Gastrocnemius medialis (tissue), 4 donors: ENCODE measurements at regions of chr9 and their contacts with region 1.

Region 1: DNA sequence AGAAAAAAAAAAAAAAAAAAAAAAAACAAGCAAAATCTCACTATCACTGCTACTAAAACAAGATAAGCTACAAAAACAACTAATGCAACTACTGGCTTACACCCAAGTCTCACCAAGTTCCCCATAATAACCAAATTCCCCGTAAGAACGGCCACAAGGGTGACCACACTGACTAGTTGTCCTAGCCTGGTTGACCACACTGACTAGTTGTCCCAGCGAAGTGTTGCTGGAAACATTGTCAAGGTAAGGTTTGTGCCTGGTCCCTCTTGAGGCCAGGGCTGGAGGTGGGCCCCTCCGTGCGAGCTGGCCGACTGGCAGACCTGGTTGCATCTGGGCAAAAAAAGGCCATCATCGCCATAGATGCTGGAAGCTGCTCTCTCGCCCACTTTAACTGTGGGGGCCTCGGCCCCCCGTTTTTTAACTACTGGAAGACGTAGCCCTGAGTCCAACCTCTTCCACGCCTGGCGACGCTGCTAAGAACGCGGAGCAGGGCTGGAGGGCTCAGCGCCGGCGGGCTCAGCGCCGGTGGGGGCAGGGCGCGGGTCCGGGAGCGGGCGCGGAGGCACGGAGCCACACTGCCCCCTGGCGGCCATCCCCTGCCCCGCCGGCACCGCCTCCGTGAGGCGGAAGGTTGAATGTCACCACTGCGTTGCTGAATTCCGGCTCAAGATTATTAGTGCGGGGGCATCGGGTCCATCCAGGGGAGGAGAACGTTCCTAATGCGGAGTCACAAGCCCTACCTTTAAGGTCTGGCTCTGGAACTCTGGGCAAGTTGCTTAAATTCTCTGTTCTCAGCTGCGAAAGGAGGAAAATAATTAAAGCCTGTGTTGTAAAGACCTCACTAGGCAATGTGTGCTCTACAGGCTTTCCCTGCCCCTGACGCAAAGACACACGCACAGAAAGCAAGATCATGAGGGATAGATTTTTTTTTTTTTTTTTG is 84.0 kb downstream of the HSD17B3 start:
- DNase-seq: peak; percentile 18 to 20
- ATAC-seq: peak; percentile 77 to 81
- H3K4me3 ChIP-seq: peak overlapping the region; percentile 33 to 55 (median 40)
- H3K27ac ChIP-seq: no peak overlapping the region
- H3K4me1 ChIP-seq: peaks cover 0 to 2% of the 10 kb centered on the region in 2 donors
- H3K27me3 ChIP-seq: peaks cover 0 to 19% (median 15%) of the 10 kb centered on the region in 3 donors
- CTCF ChIP-seq: peak; percentile 76 to 92 (median 82)
- POLR2A ChIP-seq: no peak

Region 2: GRCh38 chr9:94681508-94681907 is 1536.5 kb before region 1 on chr9:
- in situ Hi-C with region 1: loop called in 1 of 4 experiments (anchors 25 kb)
- intact Hi-C with region 1: no loop called
- DNase-seq: peak; percentile 54 to 64
- ATAC-seq: peak; percentile 96 to 99
- H3K4me3 ChIP-seq: no peak overlapping the region
- H3K27ac ChIP-seq: peak overlapping the region in 1 of 4 donors; percentile 44
- H3K4me1 ChIP-seq: no peaks in the 10 kb centered on the region
- H3K27me3 ChIP-seq: no peaks in the 10 kb centered on the region
- CTCF ChIP-seq: peak; percentile 46 to 77 (median 72)
- POLR2A ChIP-seq: no peak

Region 3: DNA sequence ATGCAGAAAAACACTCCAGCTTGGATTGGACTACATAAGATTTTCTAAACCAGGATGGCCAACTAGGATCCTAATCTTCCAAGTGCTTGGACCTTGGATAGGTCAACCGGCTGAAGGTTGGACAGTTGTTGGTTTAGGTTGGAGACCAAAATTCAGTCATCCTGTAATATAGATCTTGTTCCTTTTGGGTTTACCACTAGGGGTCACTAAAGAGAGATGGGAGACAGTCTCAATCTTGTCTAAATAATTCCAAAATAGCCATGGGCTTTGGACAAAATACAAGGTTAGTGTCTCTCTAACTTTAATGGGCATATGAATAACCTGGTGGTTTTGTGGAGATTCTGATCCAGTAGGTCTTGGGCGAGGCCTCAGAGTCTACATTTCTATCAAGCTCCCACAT is 491.3 kb before region 1 on chr9:
- in situ Hi-C with region 1: loop called (anchors 10 to 25 kb)
- intact Hi-C with region 1: loop called (anchors 5 kb)
- DNase-seq: no peak
- ATAC-seq: no peak
- H3K4me3 ChIP-seq: no peak overlapping the region
- H3K27ac ChIP-seq: no peak overlapping the region
- H3K4me1 ChIP-seq: no peaks in the 10 kb centered on the region
- H3K27me3 ChIP-seq: no peaks in the 10 kb centered on the region
- CTCF ChIP-seq: peak; percentile 30 to 56 (median 44)
- POLR2A ChIP-seq: no peak

Region 4: GRCh38 chr9:95875305-95876137 is 342.5 kb before region 1 on chr9 and contains the start of gene ERCC6L2:
- in situ Hi-C with region 1: loop called in 1 of 4 experiments (anchors 25 kb)
- intact Hi-C with region 1: no loop called
- DNase-seq: peak; percentile 90 to 95
- ATAC-seq: peak; percentile 95 to 97
- H3K4me3 ChIP-seq: no peak within 1 kb of the TSS
- H3K27ac ChIP-seq: no peak within 1 kb of the TSS
- H3K4me1 ChIP-seq: peaks cover 11 to 19% of the 10 kb centered on the region in 2 donors
- H3K27me3 ChIP-seq: no peaks in the 10 kb centered on the region
- CTCF ChIP-seq: no peak
- POLR2A ChIP-seq: peak; percentile 50 to 69
- total RNA-seq, gene ERCC6L2: 24.2 to 46.2 (median 35.9) TPM

Region 5: DNA sequence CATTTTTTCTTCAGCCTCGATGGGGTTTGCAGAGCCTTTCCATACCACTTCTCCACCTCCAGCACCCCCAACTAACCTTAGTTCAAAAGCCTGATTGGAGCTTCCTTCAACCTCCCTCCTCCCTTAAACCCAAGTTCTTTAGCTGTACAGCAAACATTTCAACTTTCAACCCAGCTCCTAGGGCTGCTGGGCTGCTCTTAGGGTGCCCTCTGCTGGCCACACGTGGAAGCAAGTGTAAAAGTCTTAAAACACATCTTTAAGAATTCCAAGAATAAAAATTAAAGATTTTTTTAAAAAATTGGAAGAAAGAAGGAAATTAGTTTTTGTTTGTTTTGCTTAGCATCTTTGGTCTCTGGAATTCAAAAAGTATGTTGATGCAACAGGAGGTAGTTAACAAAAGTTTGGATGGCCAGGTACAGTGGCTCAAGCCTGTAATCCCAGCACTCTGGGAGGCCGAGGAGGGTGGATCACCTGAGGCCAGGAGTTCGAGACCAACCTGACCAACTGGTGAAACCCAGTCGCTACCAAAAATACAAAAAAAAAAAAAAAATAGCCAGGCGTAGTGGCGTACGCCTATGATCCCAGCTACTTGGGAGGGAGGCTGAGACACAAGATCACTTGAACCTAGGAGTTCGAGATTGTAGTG is 99.4 kb after region 1 on chr9:
- in situ Hi-C with region 1: no loop called
- intact Hi-C with region 1: loop called (anchors 5 kb)
- DNase-seq: peak; percentile 13 to 19
- ATAC-seq: peak in 1 of 2 donors; percentile 44
- H3K4me3 ChIP-seq: no peak overlapping the region
- H3K27ac ChIP-seq: no peak overlapping the region
- H3K4me1 ChIP-seq: no peaks in the 10 kb centered on the region
- H3K27me3 ChIP-seq: no peaks in the 10 kb centered on the region
- CTCF ChIP-seq: peak; percentile 33 to 80 (median 58)
- POLR2A ChIP-seq: no peak